Mammary epithelial cell (primary cell): ENCODE measurements at regions of chr7 and their contacts with region 1.

Region 1: GRCh38 chr7:5596046-5596895 is 172.6 kb upstream of the TNRC18 start:
- DNase-seq: peak; percentile 90
- H3K4me3 ChIP-seq: peak overlapping the region; percentile 68 to 90 (median 88)
- H3K27ac ChIP-seq: peak overlapping the region; percentile 58
- H3K4me1 ChIP-seq: peaks cover 46% of the 10 kb centered on the region
- H3K27me3 ChIP-seq: no peaks in the 10 kb centered on the region
- CTCF ChIP-seq: no peak

Region 2: DNA sequence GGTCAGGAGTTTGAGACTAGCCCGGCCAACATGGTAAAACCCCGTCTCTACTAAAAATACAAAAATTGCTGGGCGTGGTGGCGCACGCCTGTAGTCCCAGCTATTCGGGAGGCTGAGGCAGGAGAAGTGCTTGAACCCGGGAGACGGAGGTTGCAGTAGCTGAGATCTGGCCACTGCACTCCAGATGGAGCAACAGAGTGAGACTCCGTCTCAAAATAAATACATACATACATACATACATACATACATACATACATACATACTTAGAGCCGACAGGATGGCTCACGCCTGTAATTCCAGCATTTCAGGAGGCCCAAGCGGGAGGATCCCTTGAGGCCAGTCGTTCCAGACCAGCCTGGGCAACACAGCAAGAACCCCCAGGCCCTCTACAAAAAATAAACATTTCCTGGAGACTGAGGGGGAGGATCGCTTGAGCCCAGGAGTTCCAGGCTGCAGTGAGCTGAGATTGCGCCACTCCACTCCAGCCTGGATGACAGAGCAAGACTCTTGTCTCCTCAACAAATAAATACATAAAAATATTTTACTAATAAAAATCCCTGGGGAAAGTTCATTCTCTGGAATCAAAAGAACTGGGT is 81.7 kb before region 1 on chr7:
- CTCF ChIA-PET with region 1: no interaction called
- dilution Hi-C with region 1: no loop called
- in situ Hi-C with region 1: no loop called
- intact Hi-C with region 1: no loop called
- DNase-seq: no peak
- H3K4me3 ChIP-seq: peak overlapping the region; percentile 79 to 98 (median 94)
- H3K27ac ChIP-seq: peak overlapping the region; percentile 94
- H3K4me1 ChIP-seq: peaks cover 24% of the 10 kb centered on the region
- H3K27me3 ChIP-seq: no peaks in the 10 kb centered on the region
- CTCF ChIP-seq: no peak

Region 3: DNA sequence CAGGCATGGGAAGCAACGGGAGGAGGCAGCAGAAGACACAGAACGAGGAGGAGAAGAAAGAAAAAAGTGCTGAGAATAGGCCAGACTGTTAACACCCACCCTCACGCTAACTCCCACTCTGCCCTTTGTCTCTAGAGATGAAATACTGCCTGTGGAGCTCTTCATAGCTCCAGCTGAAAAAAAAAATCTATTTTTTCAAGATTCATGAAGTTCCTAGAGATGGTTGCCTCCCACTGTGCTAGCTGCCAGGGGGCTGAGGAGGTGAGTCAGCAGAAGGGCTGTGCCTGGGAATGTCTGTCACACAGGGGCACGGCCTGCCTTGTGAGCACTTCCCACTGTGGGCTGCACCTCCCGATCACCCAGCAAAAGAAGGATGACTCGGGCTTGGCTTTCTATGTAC is 40.6 kb after region 1 on chr7:
- CTCF ChIA-PET with region 1: no interaction called
- dilution Hi-C with region 1: loop called (anchors 5 kb)
- in situ Hi-C with region 1: no loop called
- intact Hi-C with region 1: no loop called
- DNase-seq: peak; percentile 66
- H3K4me3 ChIP-seq: no peak overlapping the region
- H3K27ac ChIP-seq: peak overlapping the region; percentile 72
- H3K4me1 ChIP-seq: peaks cover 38% of the 10 kb centered on the region
- H3K27me3 ChIP-seq: no peaks in the 10 kb centered on the region
- CTCF ChIP-seq: no peak

Region 4: DNA sequence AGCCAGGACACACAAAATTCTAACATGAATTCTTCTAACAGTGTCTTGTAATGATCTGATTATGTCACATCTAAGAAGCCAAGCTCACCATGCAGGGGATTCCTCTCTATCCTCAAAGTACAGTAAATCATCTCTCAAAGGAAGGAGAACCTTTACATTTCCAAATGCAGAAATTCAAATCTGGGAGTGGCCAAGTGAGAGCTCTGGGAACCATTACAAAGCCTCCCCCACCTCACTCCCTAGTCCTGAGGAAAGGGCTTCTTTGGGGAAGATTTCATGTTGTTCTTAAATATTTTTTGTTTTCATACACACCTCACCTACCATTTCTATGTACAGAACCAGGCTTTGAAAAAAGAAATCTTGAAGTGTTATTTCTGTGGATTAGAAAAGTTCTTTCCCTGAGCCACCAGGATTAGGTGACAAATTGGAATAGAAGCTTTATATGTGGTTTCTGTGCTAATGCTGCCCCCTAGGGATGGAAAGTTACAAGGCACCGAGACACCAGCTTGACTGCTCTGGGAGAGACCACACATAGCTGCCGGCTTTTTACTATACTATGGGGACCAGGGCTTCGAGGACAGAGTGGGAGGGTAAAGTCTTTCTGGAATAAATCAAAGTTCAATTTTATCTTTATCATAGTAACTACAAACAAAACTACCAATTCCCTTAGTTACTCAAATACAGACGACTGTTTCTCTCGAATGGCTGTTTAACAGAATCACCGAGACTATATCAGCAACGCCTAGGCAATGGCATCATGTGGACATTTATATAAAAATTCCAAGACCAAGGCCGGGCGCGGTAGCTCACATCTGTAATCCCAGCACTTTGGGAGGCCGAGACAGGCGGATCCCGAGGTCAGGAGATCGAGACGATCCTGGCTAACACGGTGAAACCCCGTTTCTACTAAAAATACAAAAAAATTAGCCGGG is 69.1 kb after region 1 on chr7:
- CTCF ChIA-PET with region 1: no interaction called
- dilution Hi-C with region 1: no loop called
- in situ Hi-C with region 1: no loop called
- intact Hi-C with region 1: loop called (anchors 1 kb)
- DNase-seq: peak; percentile 61
- H3K4me3 ChIP-seq: no peak overlapping the region
- H3K27ac ChIP-seq: no peak overlapping the region
- H3K4me1 ChIP-seq: no peaks in the 10 kb centered on the region
- H3K27me3 ChIP-seq: no peaks in the 10 kb centered on the region
- CTCF ChIP-seq: peak; percentile 87 to 89